ENCODE measurements at regions of chr4 and their contacts with region 1.

Region 1: DNA sequence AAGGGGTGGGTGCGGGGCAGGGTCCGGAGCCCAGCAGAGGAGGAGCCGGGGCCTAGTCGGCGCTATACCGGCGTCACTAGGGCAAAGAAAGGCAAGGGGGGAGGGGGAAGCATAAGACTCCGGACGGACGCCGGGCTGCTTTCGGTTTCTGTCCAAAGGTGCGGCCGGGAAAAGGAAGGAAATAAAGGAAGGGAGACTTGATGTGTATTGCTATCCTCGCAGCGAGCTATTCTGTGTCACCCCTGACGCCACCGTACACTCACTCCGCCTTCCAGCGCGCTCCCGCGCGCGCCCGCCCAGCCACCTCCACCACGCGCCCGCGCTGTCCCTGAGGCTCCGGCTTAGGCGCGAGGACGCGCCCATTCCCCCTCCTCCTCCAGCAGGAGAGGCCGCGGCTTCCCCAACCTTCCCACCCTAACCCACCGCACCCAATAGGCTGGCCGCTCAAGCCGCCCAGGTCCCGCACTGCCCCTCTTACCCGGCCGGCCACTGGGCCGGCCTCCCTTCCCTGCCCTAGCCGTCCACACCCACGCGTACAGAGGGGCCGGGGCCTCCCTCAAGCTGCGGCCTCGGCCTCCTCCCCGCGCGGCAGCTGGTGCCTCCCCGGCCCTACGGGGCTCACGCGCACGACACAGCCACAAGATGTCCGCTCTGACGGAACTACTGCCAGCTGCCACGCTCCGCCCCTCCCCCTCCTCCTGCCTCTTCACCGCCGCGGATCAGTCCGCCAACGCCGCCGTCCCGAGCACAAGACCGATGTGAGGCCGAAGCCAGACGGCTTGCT is at the start of gene UBE2D3:
- DNase-seq: peak; percentile 85 to 98 (median 89)

Region 2: GRCh38 chr4:102500696-102501446 is 326.2 kb before region 1 on chr4 and contains the start of gene NFKB1:
- intact Hi-C with region 1: loop called (anchors 5 kb)
- DNase-seq: peak in 9 of 10 donors; percentile 23 to 88 (median 58)

Region 3: DNA sequence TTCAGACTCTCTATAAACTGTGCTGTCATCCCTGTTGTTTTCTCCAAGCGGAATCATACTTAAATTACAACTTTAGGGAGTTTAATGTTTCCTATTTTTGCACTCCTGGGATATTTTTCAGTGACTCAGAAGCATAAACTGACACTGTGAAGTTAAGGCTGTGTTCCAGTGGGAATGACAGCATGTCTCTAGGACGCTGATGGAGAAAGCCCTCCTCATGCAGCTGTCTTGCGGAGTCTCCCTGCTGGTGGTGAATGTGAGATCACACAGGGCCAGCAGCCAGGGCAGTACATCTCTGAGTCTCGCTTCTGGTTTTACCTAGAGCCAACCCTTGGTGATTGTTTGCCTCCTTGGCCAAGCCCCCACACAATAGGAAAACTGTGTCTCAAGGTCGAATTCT is 272.6 kb before region 1 on chr4:
- intact Hi-C with region 1: no loop called
- DNase-seq: peak in 7 of 10 donors; percentile 12 to 84 (median 44)

Region 4: DNA sequence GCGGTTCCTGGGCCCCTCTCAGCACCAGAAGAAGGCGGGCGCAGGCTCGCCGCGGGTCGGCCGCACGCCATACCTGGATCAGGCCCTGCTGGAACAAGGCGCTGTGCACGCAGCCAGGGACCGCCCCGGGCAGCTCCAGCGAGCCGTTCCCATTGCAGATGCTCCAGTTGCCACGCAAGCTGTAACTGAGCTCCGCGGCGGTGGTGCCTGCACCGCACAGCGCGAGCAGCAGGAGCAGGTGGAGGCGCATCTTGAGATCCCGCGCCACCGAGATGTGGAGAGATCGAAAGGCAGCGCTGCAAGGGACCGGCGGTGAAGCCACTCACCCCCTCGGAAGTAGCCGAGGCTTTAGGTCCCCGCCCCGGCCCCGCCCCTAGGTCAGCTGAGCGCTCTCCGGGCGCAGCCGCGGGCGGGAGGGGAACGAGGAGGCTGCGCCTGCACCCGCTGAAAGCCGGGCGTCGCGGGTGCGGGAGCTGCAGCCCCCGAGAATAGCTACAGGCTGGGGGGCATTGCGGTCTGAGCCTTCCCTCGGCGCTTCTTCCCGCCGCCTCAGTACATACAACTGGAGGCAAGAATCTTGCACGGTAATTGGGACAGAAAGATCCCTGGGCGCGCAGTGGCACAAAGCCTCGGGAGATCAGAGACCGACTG is 66.3 kb before region 1 on chr4 and contains the start of gene MANBA:
- intact Hi-C with region 1: loop called (anchors 1 kb)
- DNase-seq: peak; percentile 71 to 98 (median 81)

Region 5: DNA sequence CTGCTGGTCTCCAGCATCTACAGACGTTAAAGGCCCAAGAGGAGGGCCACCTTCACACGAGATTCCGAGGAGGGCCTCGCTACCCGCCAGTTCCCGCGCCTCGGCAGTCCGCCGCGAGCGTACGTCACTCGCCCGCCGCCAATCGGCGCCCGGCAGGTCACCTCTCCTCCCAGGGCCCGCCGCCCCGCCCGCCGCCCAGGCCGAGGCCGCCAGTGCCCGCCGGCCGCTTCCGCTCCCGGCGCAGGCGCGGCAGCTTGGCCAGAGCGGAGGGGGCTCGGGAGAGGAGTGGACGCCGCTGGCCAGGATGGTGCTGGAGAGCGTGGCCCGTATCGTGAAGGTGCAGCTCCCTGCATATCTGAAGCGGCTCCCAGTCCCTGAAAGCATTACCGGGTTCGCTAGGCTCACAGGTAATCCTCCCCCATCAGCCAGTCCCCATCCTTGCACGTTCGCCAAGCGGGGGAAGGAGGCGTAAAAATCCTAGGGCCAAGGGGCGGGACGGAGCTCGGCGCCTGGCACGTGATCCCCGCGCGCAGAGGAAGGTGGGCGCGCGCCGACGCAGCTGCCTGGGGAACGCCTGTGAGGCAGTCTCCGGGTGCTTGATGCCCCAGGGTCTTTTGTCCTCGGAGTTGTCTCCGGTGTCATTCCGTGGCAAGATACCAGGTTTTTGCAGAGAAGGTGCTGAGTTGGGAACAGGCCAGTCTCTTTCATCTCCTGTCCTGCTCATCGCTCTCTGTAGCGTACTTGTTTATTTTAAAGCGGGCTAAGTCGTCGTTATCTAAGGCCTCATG is 41.9 kb after region 1 on chr4 and contains the start of gene CISD2:
- intact Hi-C with region 1: loop called (anchors 1 kb)
- DNase-seq: peak; percentile 86 to 99 (median 93)

Region 6: DNA sequence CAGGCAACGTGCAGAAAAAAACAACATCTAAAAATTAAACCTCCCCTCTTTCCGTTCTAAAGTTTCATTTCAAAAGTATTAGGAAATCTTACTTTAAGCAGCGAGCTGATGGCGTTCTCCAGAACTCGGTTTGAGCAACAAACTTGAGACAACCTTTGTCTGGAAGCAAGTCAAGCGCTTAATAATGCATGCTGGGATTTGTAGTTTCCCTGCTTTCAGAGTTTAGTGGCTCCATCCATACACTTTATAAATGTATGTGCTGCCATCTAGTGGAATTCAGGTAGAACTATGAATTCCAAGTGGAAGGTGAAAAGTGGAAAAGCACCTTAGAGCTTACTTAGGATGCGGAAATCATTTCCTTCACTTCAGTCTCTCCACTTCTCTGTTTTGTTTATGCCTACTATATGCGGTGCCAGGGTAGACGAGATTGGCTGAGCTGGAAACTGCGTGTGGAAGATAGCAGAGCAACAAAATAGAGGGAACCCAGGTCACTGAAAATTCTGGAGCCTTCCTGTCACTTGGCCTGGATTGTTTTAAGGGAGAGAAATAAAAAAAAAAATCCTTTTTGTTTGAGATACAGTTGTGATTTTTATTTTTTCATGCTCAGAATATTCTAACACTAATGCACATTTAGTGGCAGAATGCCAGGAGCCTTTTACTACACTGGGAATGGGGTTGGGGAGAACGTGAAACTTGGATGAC is 272.8 kb after region 1 on chr4 and contains the start of gene BDH2:
- intact Hi-C with region 1: loop called (anchors 5 kb)
- DNase-seq: peak in 2 of 10 donors; percentile 9 to 34